ENCODE measurements at regions of chr3 and their contacts with region 1.

Region 1: DNA sequence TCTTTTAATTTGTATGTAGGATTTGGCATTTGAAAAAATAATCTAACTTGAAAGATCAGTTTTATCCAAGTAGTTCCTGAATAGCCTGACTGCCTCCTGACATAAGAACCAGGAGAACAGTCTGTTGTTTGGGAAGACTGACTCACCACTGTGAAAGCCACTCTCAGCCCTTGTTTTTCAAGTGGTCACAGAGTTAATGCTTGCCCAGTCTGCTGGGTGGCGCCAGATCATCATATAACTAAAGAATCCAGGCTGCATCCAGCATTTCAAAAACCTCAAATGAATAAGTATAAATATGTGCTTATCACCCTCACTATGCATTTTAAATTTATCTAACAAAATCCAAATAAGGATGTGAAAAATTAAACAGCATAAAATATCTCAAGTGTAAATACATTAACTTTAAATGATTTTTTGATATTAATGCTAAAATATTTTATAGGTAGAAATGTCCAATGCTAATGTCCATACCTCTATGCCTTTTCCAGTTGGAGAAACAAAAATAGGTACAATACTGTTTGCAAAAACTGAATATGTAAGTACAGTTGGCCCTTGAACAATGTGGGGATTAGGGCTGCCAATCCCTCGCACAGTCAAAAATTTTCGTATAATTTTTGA is 26.9 kb upstream of the ZBBX start:
- DNase-seq: peak in 5 of 6 donors; percentile 41 to 75 (median 60)
- ATAC-seq: peak; percentile 97 to 100 (median 100)
- H3K4me3 ChIP-seq: no peak overlapping the region
- H3K27ac ChIP-seq: no peak overlapping the region
- H3K4me1 ChIP-seq: no peaks in the 10 kb centered on the region
- H3K27me3 ChIP-seq: no peaks in the 10 kb centered on the region
- CTCF ChIP-seq: peak in 3 of 4 donors; percentile 32 to 66 (median 52)

Region 2: GRCh38 chr3:167361306-167361705 is 45.7 kb before region 1 on chr3:
- intact Hi-C with region 1: no loop called
- DNase-seq: no peak
- ATAC-seq: no peak
- H3K4me3 ChIP-seq: no peak overlapping the region
- H3K27ac ChIP-seq: no peak overlapping the region
- H3K4me1 ChIP-seq: no peaks in the 10 kb centered on the region
- H3K27me3 ChIP-seq: no peaks in the 10 kb centered on the region
- CTCF ChIP-seq: no peak

Region 3: DNA sequence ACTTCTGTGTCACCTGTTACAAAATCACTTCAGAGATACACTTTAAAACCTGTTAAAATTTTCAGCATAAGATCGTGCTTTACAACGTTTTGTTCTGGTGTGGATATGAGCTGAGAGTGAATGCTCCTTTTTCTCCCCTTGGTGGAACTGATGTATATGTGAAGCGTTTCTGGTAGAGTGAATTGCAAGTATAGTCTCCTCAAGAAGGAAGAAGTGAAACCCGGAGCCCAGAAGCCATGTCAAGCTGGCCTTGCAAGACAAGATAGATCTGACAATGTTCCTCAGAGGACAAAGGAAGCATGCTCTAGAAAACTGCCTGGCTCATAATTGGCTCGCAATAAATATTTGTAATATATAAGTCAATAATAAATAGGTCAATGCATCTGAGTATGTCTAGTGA is 43.2 kb after region 1 on chr3:
- intact Hi-C with region 1: no loop called
- DNase-seq: no peak
- ATAC-seq: no peak
- H3K4me3 ChIP-seq: no peak overlapping the region
- H3K27ac ChIP-seq: no peak overlapping the region
- H3K4me1 ChIP-seq: peaks cover 0 to 3% (median 0%) of the 10 kb centered on the region in 3 donors
- H3K27me3 ChIP-seq: peaks cover 0 to 2% (median 0%) of the 10 kb centered on the region in 4 donors
- CTCF ChIP-seq: no peak

Region 4: GRCh38 chr3:167539849-167540248 is 132.9 kb after region 1 on chr3:
- intact Hi-C with region 1: no loop called
- DNase-seq: peak in 1 of 6 donors; percentile 12
- ATAC-seq: no peak
- H3K4me3 ChIP-seq: no peak overlapping the region
- H3K27ac ChIP-seq: no peak overlapping the region
- H3K4me1 ChIP-seq: no peaks in the 10 kb centered on the region
- H3K27me3 ChIP-seq: no peaks in the 10 kb centered on the region
- CTCF ChIP-seq: no peak

Region 5: GRCh38 chr3:167650459-167650858 is 243.5 kb after region 1 on chr3:
- intact Hi-C with region 1: no loop called
- DNase-seq: no peak
- ATAC-seq: no peak
- H3K4me3 ChIP-seq: no peak overlapping the region
- H3K27ac ChIP-seq: no peak overlapping the region
- H3K4me1 ChIP-seq: no peaks in the 10 kb centered on the region
- H3K27me3 ChIP-seq: no peaks in the 10 kb centered on the region
- CTCF ChIP-seq: no peak

Region 6: GRCh38 chr3:167684388-167684993 is 277.5 kb after region 1 on chr3:
- intact Hi-C with region 1: loop called in 1 of 3 experiments (anchors 10 kb)
- DNase-seq: peak in 3 of 6 donors; percentile 26 to 55 (median 34)
- ATAC-seq: peak; percentile 67 to 92 (median 80)
- H3K4me3 ChIP-seq: no peak overlapping the region
- H3K27ac ChIP-seq: no peak overlapping the region
- H3K4me1 ChIP-seq: no peaks in the 10 kb centered on the region
- H3K27me3 ChIP-seq: no peaks in the 10 kb centered on the region
- CTCF ChIP-seq: peak; percentile 67 to 79 (median 68)

Measured in pancreas (tissue), 10 donors.